ENCODE measurements at regions of chr13 and their contacts with region 1.

Region 1: GRCh38 chr13:99922631-99923426 is 48.7 kb downstream of the ZIC5 start:
- DNase-seq: peak; percentile 87 to 92 (median 89)
- ATAC-seq: peak; percentile 97
- H3K4me3 ChIP-seq: no peak overlapping the region
- H3K4me1 ChIP-seq: no peaks in the 10 kb centered on the region
- CTCF ChIP-seq: no peak

Region 2: GRCh38 chr13:99995589-99996380 is 73.0 kb after region 1 on chr13:
- intact Hi-C with region 1: loop called in 1 of 2 experiments (anchors 2 kb)
- DNase-seq: no peak
- ATAC-seq: no peak
- H3K4me3 ChIP-seq: no peak overlapping the region
- H3K4me1 ChIP-seq: peaks cover 4% of the 10 kb centered on the region
- CTCF ChIP-seq: no peak

Measured in mucosa of descending colon (tissue), 3 donors.